Mucosa of descending colon (tissue), 3 donors: ENCODE measurements at regions of chr15 and their contacts with region 1.

Region 1: GRCh38 chr15:40782580-40783227 is 12.9 kb downstream of the C15orf62 start:
- DNase-seq: peak; percentile 86 to 91 (median 91)
- ATAC-seq: peak; percentile 92
- H3K4me3 ChIP-seq: no peak overlapping the region
- H3K4me1 ChIP-seq: peaks cover 15% of the 10 kb centered on the region
- CTCF ChIP-seq: peak; percentile 73

Region 2: GRCh38 chr15:40600956-40601355 is 181.7 kb before region 1 on chr15:
- intact Hi-C with region 1: no loop called
- DNase-seq: no peak
- ATAC-seq: no peak
- H3K4me3 ChIP-seq: no peak overlapping the region
- H3K4me1 ChIP-seq: no peaks in the 10 kb centered on the region
- CTCF ChIP-seq: no peak

Region 3: GRCh38 chr15:40694688-40695468 is 87.8 kb before region 1 on chr15 and contains the start of gene RAD51:
- intact Hi-C with region 1: loop called in 1 of 2 experiments (anchors 10 kb)
- DNase-seq: peak; percentile 96 to 97 (median 97)
- ATAC-seq: peak; percentile 96
- H3K4me3 ChIP-seq: peak within 1 kb of the TSS; percentile 58
- H3K4me1 ChIP-seq: peaks cover 14% of the 10 kb centered on the region
- CTCF ChIP-seq: no peak
- total RNA-seq, gene RAD51: 2.9 to 13.1 (median 8.3) TPM